ENCODE measurements at regions of chr19 and their contacts with region 1.

Region 1: DNA sequence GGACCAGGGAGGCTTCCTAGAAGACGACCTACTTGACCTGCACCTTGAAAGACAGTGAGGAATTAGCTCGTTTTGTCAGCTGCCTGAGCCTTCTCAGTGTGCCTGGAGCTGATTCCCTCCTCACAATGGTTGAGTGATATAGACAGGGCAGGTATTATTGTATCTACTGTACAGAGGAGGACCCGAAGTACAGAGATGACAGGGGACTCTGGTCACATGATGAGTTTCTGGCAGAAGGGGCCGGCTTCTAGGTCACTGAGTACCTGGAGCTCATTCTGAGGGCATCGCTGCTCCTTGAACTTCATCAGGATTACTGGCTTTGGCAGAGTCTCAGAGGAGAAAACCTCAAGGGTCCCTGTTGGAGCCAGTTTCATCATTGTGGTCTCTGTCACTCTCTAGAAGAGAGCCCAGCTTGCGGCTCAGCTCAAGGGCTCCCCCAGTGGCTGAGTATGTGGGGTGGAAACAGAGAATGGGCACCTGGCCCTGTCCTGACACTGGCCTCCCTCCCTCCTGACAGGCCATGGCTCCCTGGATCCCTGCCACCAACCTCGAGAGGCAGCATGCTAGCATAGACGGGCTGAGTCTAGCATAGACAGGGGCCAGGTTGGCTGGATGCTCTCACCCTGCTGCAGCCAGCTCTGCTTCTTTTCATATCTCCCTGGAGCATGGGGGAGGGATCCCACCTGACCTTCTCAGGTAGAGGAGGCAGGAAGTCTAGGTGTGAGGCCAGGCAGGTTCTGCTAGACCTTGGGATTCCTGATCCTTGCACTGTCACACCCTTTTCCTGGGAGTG is 38.7 kb downstream of the NFIX start:
- DNase-seq: peak in 2 of 3 donors; percentile 70 to 73
- H3K4me3 ChIP-seq: no peak overlapping the region
- H3K27ac ChIP-seq: no peak overlapping the region
- H3K4me1 ChIP-seq: peaks cover 0 to 7% (median 3%) of the 10 kb centered on the region in 4 experiments
- H3K27me3 ChIP-seq: no peaks in the 10 kb centered on the region

Region 2: GRCh38 chr19:12815088-12815487 is 218.9 kb before region 1 on chr19:
- CTCF ChIA-PET with region 1: no interaction called
- POLR2A ChIA-PET with region 1: no interaction called
- DNase-seq: no peak
- H3K4me3 ChIP-seq: no peak overlapping the region
- H3K27ac ChIP-seq: no peak overlapping the region
- H3K4me1 ChIP-seq: no peaks in the 10 kb centered on the region
- H3K27me3 ChIP-seq: no peaks in the 10 kb centered on the region

Region 3: GRCh38 chr19:12983542-12984142 is 50.4 kb before region 1 on chr19:
- CTCF ChIA-PET with region 1: interaction called, 57 read pairs
- POLR2A ChIA-PET with region 1: no interaction called
- DNase-seq: peak; percentile 77 to 88 (median 87)
- H3K4me3 ChIP-seq: peak overlapping the region in 5 of 7 experiments; percentile 5 to 64 (median 32)
- H3K27ac ChIP-seq: no peak overlapping the region
- H3K4me1 ChIP-seq: peaks cover 0 to 8% (median 4%) of the 10 kb centered on the region in 4 experiments
- H3K27me3 ChIP-seq: peaks cover 0 to 3% (median 0%) of the 10 kb centered on the region in 5 experiments

Region 4: DNA sequence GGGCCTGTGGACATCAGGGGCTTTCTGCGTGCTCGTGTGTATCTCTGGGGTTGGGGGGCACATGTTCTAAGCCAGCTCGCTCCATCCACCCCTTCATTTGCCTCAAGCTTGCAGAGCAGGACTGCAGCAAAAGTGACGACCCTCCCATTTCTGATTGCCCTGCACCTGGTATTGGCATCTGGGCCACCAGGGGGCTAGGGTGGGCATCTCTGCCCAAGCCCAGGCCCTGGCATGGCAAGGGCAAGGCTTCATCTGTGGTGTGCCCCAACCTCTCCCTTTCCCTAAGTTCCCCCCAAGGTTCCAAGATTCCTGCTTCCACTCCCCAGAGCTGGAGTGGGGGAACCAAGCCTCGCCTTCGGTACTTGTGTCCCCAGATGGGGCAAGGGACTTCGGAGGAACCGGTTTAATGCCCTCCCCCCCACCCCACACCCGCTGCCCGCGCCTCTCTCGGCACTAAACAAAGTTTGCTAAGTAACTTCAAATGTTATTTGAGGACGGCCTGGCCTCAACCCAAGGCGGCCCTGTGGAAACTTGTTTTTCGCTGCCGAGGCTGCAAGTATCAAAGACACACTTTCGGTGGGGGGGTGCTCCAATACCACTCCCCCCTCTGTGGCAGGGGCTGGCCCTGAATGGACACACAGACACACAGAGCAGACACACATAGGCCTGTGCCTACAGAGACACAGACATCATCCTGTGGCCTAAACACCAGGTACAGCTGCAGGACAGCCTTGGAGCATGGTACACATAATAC is 26.5 kb before region 1 on chr19:
- CTCF ChIA-PET with region 1: interaction called, 66 read pairs
- POLR2A ChIA-PET with region 1: no interaction called
- DNase-seq: peak in 1 of 3 donors; percentile 28
- H3K4me3 ChIP-seq: no peak overlapping the region
- H3K27ac ChIP-seq: no peak overlapping the region
- H3K4me1 ChIP-seq: peaks cover 0 to 29% (median 15%) of the 10 kb centered on the region in 4 experiments
- H3K27me3 ChIP-seq: peaks cover 0 to 48% (median 25%) of the 10 kb centered on the region in 5 experiments

Region 5: DNA sequence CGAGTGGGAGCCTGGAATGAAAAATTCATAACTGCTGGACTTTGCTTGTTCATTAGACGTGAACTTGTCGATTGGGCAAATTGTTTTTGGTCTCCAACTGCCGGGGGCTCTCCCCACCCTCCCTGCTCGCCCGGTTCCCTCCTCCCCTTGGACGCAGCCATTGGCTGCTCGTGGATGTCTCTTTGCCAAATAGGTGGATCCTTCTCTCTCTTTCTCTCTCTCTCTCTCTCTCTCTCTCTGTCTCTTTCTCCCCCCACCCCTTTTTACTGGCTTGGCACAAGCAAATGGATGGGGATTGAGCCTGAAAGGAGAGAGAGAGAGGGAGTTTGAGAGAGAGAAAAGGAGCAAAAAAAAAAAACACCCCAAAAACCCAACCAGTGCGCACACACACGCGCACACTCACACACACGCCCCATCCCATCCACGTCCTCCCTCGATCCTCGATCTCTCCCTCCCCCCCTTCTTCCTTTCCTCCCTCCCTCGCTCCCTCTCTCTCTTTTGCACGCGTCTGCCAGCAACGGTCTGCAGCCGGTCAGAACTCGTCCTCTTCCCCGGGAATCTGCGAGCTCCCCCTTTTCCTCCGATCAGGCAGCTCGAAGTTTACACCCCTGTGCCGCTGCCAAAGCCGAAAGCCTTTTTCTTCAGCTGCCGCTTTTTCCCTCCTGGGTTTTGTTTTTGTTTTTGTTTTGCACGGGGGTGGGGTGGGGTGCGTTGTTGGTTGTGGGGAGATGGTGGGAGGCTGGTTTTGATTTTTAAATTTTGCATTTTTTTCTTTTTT is 11.0 kb before region 1 on chr19:
- CTCF ChIA-PET with region 1: interaction called, 66 read pairs
- POLR2A ChIA-PET with region 1: no interaction called
- DNase-seq: peak; percentile 73 to 84 (median 73)
- H3K4me3 ChIP-seq: peak overlapping the region in 5 of 7 experiments; percentile 63 to 83 (median 72)
- H3K27ac ChIP-seq: peak overlapping the region; percentile 46 to 83
- H3K4me1 ChIP-seq: peaks cover 0 to 40% (median 18%) of the 10 kb centered on the region in 4 experiments
- H3K27me3 ChIP-seq: peaks cover 2 to 54% (median 7%) of the 10 kb centered on the region in 5 experiments

Region 6: DNA sequence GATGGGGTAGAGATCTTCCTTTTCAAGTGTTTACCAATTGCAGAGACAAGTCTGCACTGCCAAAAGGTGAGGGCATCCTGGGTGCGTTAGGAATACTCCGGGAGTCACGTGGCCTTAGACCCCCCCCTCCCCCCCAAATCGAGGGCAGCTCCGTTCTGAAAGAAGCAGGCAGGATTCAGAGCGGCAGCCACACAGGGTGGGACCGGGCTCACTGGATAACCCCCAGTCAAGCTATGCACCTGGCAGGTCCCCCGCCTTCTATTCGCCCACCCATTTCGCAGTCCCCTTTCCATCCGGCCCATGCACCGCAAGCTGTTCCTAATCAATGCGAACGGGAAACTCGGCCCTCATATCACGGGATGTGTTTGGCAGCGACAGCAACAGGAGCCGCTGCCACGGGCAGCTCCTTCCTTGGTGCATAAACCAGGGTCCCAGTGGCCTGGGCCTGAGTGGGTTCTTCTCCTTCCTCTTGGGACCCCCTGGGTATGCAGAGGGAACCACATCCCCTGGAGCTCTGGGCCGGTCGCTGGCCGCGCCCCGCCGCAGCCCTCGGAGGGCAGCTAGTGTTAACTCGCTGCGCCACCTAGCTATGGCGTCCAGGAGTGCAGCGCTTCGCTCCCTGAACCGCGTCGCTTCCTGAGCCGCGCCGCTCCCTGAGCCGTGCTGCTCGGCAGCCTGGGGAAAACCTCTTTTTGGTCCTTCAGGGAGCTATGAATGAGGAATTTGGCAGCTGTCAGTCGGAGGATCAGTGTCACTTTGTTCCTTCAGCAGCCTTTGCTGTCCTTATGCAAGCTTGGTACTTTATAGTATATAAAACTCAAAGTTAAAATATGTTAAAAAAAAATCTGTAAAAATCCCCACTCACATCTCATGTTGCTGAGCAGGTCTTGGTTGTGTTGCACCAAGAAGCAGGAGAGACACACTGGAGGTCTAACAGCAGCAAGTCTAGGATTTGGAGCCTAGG is 27.2 kb after region 1 on chr19:
- CTCF ChIA-PET with region 1: interaction called, 253 read pairs
- POLR2A ChIA-PET with region 1: no interaction called
- DNase-seq: peak; percentile 63 to 78 (median 78)
- H3K4me3 ChIP-seq: peak overlapping the region; percentile 34 to 86 (median 64)
- H3K27ac ChIP-seq: no peak overlapping the region
- H3K4me1 ChIP-seq: peaks cover 0 to 72% (median 34%) of the 10 kb centered on the region in 4 experiments
- H3K27me3 ChIP-seq: no peaks in the 10 kb centered on the region

Region 7: GRCh38 chr19:13082192-13083007 is 48.4 kb after region 1 on chr19:
- CTCF ChIA-PET with region 1: interaction called, 72 read pairs
- POLR2A ChIA-PET with region 1: no interaction called
- DNase-seq: peak in 2 of 3 donors; percentile 41 to 42
- H3K4me3 ChIP-seq: no peak overlapping the region
- H3K27ac ChIP-seq: no peak overlapping the region
- H3K4me1 ChIP-seq: peaks cover 0 to 62% (median 51%) of the 10 kb centered on the region in 4 experiments
- H3K27me3 ChIP-seq: no peaks in the 10 kb centered on the region

Region 8: GRCh38 chr19:13115936-13116281 is 81.9 kb after region 1 on chr19:
- CTCF ChIA-PET with region 1: no interaction called
- POLR2A ChIA-PET with region 1: no interaction called
- DNase-seq: no peak
- H3K4me3 ChIP-seq: peak overlapping the region; percentile 83 to 97 (median 95)
- H3K27ac ChIP-seq: peak overlapping the region; percentile 61 to 83
- H3K4me1 ChIP-seq: peaks cover 0 to 46% (median 36%) of the 10 kb centered on the region in 4 experiments
- H3K27me3 ChIP-seq: no peaks in the 10 kb centered on the region

Region 9: GRCh38 chr19:13128583-13128982 is 94.6 kb after region 1 on chr19:
- CTCF ChIA-PET with region 1: no interaction called
- POLR2A ChIA-PET with region 1: no interaction called
- DNase-seq: no peak
- H3K4me3 ChIP-seq: no peak overlapping the region
- H3K27ac ChIP-seq: no peak overlapping the region
- H3K4me1 ChIP-seq: peaks cover 0 to 14% (median 9%) of the 10 kb centered on the region in 4 experiments
- H3K27me3 ChIP-seq: no peaks in the 10 kb centered on the region

Measured in common myeloid progenitor, CD34-positive (primary cell).